ENCODE measurements at regions of chr3 and their contacts with region 1.

Region 1: GRCh38 chr3:141192345-141192744 is 39.3 kb upstream of the PXYLP1 start:
- DNase-seq: peak; percentile 88 to 100
- H3K4me3 ChIP-seq: no peak overlapping the region
- H3K27ac ChIP-seq: no peak overlapping the region
- H3K4me1 ChIP-seq: no peaks in the 10 kb centered on the region
- H3K27me3 ChIP-seq: no peaks in the 10 kb centered on the region
- CTCF ChIP-seq: peak; percentile 89 to 99 (median 99)
- EP300 ChIP-seq: no peak
- POLR2A ChIP-seq: no peak
- RAD21 ChIP-seq: peak; percentile 100

Region 2: DNA sequence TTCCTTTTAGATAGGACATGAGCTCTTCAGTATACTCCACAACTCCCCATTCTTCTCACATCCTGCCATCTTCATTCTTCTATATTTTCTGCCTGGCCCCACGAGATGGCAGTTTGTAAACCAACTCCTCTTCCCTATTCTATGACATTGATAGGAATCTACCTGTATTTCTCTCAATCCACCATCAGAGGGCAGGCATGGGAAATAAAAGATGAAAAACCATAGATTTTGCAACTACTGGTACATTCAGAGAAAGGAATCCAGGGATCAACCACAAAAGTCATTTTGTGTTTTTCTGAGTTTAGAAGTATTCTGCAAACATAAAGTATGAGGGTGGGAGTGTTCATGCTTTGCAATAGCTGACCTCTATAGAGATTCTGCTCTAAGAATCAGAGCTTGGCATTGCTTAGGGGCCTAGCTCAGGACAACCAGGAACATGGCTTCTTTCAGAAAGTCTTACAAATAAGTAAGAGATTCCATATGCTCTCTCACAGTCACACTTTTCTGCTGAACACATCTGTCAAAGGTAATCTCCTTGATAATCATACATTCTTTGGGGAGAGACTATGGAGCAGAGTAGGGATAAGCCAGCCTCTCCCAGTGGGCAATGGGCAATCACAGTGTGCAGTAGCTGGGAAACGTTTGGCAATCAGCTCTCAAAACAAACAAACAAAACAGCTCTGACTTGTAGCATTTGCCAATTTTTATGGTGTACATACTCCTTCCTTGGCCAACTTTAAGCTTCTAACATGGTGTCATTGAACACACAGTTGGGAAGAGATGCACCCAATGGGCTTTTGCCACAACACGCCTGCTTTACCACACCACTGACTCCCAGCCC is 293.8 kb before region 1 on chr3:
- CTCF ChIA-PET with region 1: interaction called, 10 read pairs
- POLR2A ChIA-PET with region 1: no interaction called
- DNase-seq: no peak
- H3K4me3 ChIP-seq: no peak overlapping the region
- H3K27ac ChIP-seq: no peak overlapping the region
- H3K4me1 ChIP-seq: no peaks in the 10 kb centered on the region
- H3K27me3 ChIP-seq: no peaks in the 10 kb centered on the region
- CTCF ChIP-seq: peak in 2 of 3 experiments; percentile 47 to 58; a peak in 2 of 4 replicates
- EP300 ChIP-seq: no peak
- POLR2A ChIP-seq: no peak
- RAD21 ChIP-seq: peak; percentile 53 to 56

Region 3: GRCh38 chr3:141000027-141000663 is 192.2 kb before region 1 on chr3:
- CTCF ChIA-PET with region 1: interaction called, 137 read pairs
- POLR2A ChIA-PET with region 1: no interaction called
- DNase-seq: peak; percentile 34 to 76
- H3K4me3 ChIP-seq: no peak overlapping the region
- H3K27ac ChIP-seq: no peak overlapping the region
- H3K4me1 ChIP-seq: no peaks in the 10 kb centered on the region
- H3K27me3 ChIP-seq: no peaks in the 10 kb centered on the region
- CTCF ChIP-seq: peak; percentile 87 to 97 (median 95)
- EP300 ChIP-seq: no peak
- POLR2A ChIP-seq: no peak
- RAD21 ChIP-seq: peak; percentile 99

Region 4: GRCh38 chr3:141174674-141175073 is 17.7 kb before region 1 on chr3:
- CTCF ChIA-PET with region 1: interaction called, 32 read pairs
- POLR2A ChIA-PET with region 1: no interaction called
- DNase-seq: no peak
- H3K4me3 ChIP-seq: no peak overlapping the region
- H3K27ac ChIP-seq: no peak overlapping the region
- H3K4me1 ChIP-seq: peaks cover 0 to 6% (median 2%) of the 10 kb centered on the region in 4 experiments; a peak in 4 of 7 replicates
- H3K27me3 ChIP-seq: no peaks in the 10 kb centered on the region
- CTCF ChIP-seq: no peak
- EP300 ChIP-seq: no peak
- POLR2A ChIP-seq: no peak
- RAD21 ChIP-seq: no peak

Region 5: GRCh38 chr3:141255846-141256261 is 63.5 kb after region 1 on chr3:
- CTCF ChIA-PET with region 1: interaction called, 19 read pairs
- POLR2A ChIA-PET with region 1: no interaction called
- DNase-seq: peak in 1 of 2 experiments; percentile 54
- H3K4me3 ChIP-seq: no peak overlapping the region
- H3K27ac ChIP-seq: no peak overlapping the region
- H3K4me1 ChIP-seq: peaks cover 0 to 5% (median 0%) of the 10 kb centered on the region in 4 experiments; a peak in 3 of 7 replicates
- H3K27me3 ChIP-seq: no peaks in the 10 kb centered on the region
- CTCF ChIP-seq: peak in 2 of 3 experiments; percentile 47 to 78; a peak in 3 of 4 replicates
- EP300 ChIP-seq: no peak
- POLR2A ChIP-seq: no peak
- RAD21 ChIP-seq: peak; percentile 65 to 73

Measured in H1 (cell line).